Heart right ventricle (tissue), 16 donors: ENCODE measurements at regions of chr19 and their contacts with region 1.

Region 1: DNA sequence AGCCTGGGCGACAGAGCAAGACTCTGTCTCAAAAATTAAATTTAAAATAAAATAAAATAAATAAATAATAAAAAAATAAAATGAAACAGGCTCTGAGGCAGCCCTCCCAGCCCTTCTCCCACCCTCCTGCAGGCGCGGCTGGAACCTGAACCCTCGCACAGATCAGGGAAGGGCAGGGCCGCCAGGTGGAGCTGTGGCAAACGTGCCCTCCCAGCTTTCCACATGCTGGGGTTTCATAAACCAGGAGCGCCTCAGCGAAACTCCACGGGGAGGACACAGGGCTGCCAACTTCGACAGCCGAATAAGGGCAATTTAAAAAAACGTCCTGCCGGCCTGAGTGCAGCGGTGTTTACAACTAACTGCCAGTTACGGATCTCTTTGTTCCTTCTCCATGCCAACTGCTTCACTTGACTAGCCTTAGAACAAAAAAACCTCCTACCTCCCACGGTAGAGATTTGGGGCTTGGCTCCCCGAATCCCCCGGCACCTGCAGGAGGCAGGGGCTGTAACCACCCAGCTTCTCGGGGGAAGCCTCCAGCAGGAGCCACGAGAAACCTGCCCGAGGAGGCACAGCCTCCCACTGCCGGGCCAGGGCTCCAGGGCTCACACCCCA is 15.9 kb downstream of the ZNF787 start:
- DNase-seq: peak; percentile 51 to 69
- ATAC-seq: peak; percentile 56 to 78 (median 74)
- H3K4me3 ChIP-seq: no peak overlapping the region
- H3K27ac ChIP-seq: peak overlapping the region in 5 of 10 donors; percentile 3 to 53 (median 20)
- H3K4me1 ChIP-seq: peaks cover 14 to 61% (median 44%) of the 10 kb centered on the region in 9 donors
- H3K27me3 ChIP-seq: no peaks in the 10 kb centered on the region
- CTCF ChIP-seq: peak; percentile 51 to 79 (median 73)

Region 2: DNA sequence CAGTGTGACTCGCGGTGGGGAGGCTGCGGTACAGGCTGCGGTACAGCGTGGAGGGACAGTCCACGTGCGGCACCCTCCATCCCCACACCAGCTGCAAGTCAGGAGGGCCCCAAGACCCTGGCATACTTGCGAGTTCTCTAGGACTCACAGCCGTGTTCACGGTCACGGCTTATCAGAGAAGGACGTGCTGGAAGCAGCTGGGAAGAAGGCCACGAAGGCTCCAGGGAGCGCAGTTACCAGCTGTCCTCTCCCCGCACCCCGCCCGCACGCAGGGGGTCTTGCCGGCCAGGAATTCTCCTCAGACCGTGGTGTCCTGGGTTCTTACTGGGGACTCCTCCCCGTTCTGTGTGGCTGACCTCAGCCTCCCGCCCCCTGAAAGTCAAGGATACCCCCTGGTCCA is 42.1 kb after region 1 on chr19:
- intact Hi-C with region 1: loop called in 3 of 10 experiments (anchors 5 to 10 kb)
- DNase-seq: no peak
- ATAC-seq: no peak
- H3K4me3 ChIP-seq: no peak overlapping the region
- H3K27ac ChIP-seq: no peak overlapping the region
- H3K4me1 ChIP-seq: peaks cover 0 to 25% (median 7%) of the 10 kb centered on the region in 9 donors
- H3K27me3 ChIP-seq: no peaks in the 10 kb centered on the region
- CTCF ChIP-seq: no peak

Region 3: GRCh38 chr19:56155124-56155687 is 50.0 kb after region 1 on chr19:
- intact Hi-C with region 1: loop called in 1 of 10 experiments (anchors 10 kb)
- DNase-seq: peak in 1 of 2 donors; percentile 36
- ATAC-seq: peak in 5 of 8 donors; percentile 36 to 45 (median 43)
- H3K4me3 ChIP-seq: no peak overlapping the region
- H3K27ac ChIP-seq: peak overlapping the region in 4 of 10 donors; percentile 69 to 89 (median 73)
- H3K4me1 ChIP-seq: peaks cover 0 to 37% (median 16%) of the 10 kb centered on the region in 9 donors
- H3K27me3 ChIP-seq: no peaks in the 10 kb centered on the region
- CTCF ChIP-seq: peak; percentile 23 to 55 (median 45)

Region 4: DNA sequence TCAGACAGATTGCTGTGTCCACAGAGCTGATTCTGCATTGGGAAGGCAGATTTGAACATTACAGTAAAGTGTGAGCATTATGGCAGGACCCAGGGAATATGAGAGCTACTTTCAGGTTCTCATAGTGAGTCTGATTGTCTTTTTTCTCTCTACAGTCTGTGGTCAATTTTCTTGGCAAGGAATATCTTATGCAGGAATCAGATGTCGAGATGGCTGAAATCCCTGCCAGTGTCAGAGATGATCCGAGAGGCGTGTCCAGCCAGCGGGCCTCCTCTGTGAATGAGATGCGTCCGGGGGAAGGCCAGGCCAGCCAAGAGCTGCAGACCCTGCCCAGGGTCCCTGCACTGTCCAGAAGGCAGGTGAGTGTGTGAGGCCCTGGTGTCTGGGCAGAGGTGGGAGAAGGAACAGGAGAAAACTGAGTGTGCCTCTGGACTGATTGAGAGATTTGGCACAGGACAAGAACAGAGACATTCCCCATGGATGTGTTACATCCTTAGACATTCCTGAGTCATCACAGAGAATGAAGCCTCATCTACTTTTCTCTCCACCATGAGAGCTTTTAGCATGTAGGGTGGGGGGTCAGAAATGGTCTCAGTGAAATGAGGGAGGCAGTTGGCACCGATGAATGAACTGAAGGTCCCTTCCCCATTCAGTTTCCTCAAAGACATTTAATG is 140.0 kb after region 1 on chr19:
- intact Hi-C with region 1: no loop called
- DNase-seq: no peak
- ATAC-seq: no peak
- H3K4me3 ChIP-seq: no peak overlapping the region
- H3K27ac ChIP-seq: no peak overlapping the region
- H3K4me1 ChIP-seq: no peaks in the 10 kb centered on the region
- H3K27me3 ChIP-seq: no peaks in the 10 kb centered on the region
- CTCF ChIP-seq: no peak